GM12878 (cell line): ENCODE measurements at regions of chr1 and their contacts with region 1.

Region 1: DNA sequence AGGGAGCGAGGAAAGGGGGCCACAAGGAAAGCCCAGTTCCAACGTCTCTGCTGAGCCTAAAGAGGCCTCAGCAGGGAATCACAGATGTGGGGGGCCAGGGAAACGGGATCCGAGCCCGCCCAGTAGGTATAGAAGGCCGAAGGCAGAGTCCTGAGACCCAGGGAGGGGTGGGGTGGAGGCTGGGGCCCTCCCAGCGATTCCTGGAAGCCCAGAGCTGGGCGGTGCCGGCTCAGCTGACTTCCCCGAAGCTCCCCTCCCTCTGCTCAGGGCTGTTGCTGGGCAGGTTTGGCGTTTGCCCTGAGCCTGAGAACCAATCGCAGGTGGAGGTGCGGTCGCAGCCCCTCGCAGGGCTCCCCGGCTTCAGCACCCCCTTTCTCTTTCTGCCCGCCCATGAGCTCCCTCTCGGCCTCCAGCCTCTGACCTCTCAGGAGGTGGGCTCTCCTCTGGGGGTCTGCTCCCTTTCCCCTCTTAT is 12.8 kb downstream of the ADAMTSL4 start:
- DNase-seq: no peak
- ATAC-seq: peak; percentile 64
- H3K4me3 ChIP-seq: peak overlapping the region; percentile 80
- H3K27ac ChIP-seq: peak overlapping the region; percentile 98
- H3K4me1 ChIP-seq: peaks cover 42% of the 10 kb centered on the region
- H3K27me3 ChIP-seq: no peaks in the 10 kb centered on the region
- CTCF ChIP-seq: no peak
- EP300 ChIP-seq: no peak
- POLR2A ChIP-seq: peak; percentile 31
- RAD21 ChIP-seq: no peak

Region 2: GRCh38 chr1:150109586-150109985 is 452.4 kb before region 1 on chr1:
- CTCF ChIA-PET with region 1: no interaction called
- POLR2A ChIA-PET with region 1: no interaction called
- RAD21 ChIA-PET with region 1: no interaction called
- SMC1A ChIA-PET with region 1: no interaction called
- in situ Hi-C with region 1: no loop called
- intact Hi-C with region 1: no loop called
- DNase-seq: no peak
- ATAC-seq: no peak
- H3K4me3 ChIP-seq: no peak overlapping the region
- H3K27ac ChIP-seq: peak overlapping the region; percentile 26
- H3K4me1 ChIP-seq: peaks cover 3% of the 10 kb centered on the region; the same call in 1 of the 2 replicates
- H3K27me3 ChIP-seq: no peaks in the 10 kb centered on the region
- CTCF ChIP-seq: no peak
- EP300 ChIP-seq: no peak
- POLR2A ChIP-seq: no peak
- RAD21 ChIP-seq: no peak

Region 3: GRCh38 chr1:150138044-150138443 is 424.0 kb before region 1 on chr1:
- CTCF ChIA-PET with region 1: no interaction called
- POLR2A ChIA-PET with region 1: no interaction called
- RAD21 ChIA-PET with region 1: no interaction called
- SMC1A ChIA-PET with region 1: no interaction called
- in situ Hi-C with region 1: no loop called
- intact Hi-C with region 1: no loop called
- DNase-seq: no peak
- ATAC-seq: no peak; the same call in 2 of the 3 replicates
- H3K4me3 ChIP-seq: no peak overlapping the region
- H3K27ac ChIP-seq: no peak overlapping the region
- H3K4me1 ChIP-seq: peaks cover 8% of the 10 kb centered on the region; the same call in 1 of the 2 replicates
- H3K27me3 ChIP-seq: no peaks in the 10 kb centered on the region
- CTCF ChIP-seq: no peak
- EP300 ChIP-seq: no peak
- POLR2A ChIP-seq: no peak
- RAD21 ChIP-seq: no peak

Region 4: DNA sequence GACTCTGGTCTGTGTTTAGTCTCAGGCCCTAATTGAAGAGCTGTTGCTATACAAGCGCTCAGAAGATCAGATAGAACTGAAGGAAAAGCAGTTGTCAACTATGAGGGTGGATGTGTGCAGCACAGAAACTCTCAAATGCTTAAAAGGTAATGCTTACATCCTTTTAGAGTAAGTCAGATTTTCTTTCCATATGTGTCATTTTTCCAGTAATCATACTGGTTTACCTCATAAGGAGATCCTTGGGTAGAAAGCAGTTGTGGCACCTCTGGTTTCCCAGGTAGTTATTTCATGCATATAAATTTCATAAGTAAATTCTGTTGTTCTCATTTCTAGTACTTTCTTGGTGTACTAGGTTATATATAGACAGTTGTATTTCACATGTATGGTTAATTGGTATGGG is 117.8 kb before region 1 on chr1:
- CTCF ChIA-PET with region 1: no interaction called
- POLR2A ChIA-PET with region 1: no interaction called
- RAD21 ChIA-PET with region 1: no interaction called
- SMC1A ChIA-PET with region 1: no interaction called
- in situ Hi-C with region 1: no loop called
- intact Hi-C with region 1: no loop called
- DNase-seq: no peak
- ATAC-seq: no peak
- H3K4me3 ChIP-seq: no peak overlapping the region
- H3K27ac ChIP-seq: no peak overlapping the region
- H3K4me1 ChIP-seq: no peaks in the 10 kb centered on the region
- H3K27me3 ChIP-seq: no peaks in the 10 kb centered on the region
- CTCF ChIP-seq: no peak
- EP300 ChIP-seq: no peak
- POLR2A ChIP-seq: no peak
- RAD21 ChIP-seq: no peak

Region 5: GRCh38 chr1:150515328-150516048 is 46.5 kb before region 1 on chr1 and contains the start of gene FALEC:
- CTCF ChIA-PET with region 1: interaction called, 11 read pairs
- POLR2A ChIA-PET with region 1: no interaction called
- RAD21 ChIA-PET with region 1: interaction called, 8 read pairs
- SMC1A ChIA-PET with region 1: interaction called, 3 read pairs
- in situ Hi-C with region 1: no loop called
- intact Hi-C with region 1: no loop called
- DNase-seq: peak; percentile 74
- ATAC-seq: peak; percentile 99
- H3K4me3 ChIP-seq: peak within 1 kb of the TSS; percentile 74
- H3K27ac ChIP-seq: peak within 1 kb of the TSS; percentile 50; the same call in 1 of the 2 replicates
- H3K4me1 ChIP-seq: peaks cover 17% of the 10 kb centered on the region
- H3K27me3 ChIP-seq: no peaks in the 10 kb centered on the region
- CTCF ChIP-seq: no peak
- EP300 ChIP-seq: no peak
- POLR2A ChIP-seq: peak; percentile 70
- RAD21 ChIP-seq: no peak
- polyA plus RNA-seq, gene FALEC: 0.21 TPM in 1 of 2 experiments, not detected in the other

Region 6: DNA sequence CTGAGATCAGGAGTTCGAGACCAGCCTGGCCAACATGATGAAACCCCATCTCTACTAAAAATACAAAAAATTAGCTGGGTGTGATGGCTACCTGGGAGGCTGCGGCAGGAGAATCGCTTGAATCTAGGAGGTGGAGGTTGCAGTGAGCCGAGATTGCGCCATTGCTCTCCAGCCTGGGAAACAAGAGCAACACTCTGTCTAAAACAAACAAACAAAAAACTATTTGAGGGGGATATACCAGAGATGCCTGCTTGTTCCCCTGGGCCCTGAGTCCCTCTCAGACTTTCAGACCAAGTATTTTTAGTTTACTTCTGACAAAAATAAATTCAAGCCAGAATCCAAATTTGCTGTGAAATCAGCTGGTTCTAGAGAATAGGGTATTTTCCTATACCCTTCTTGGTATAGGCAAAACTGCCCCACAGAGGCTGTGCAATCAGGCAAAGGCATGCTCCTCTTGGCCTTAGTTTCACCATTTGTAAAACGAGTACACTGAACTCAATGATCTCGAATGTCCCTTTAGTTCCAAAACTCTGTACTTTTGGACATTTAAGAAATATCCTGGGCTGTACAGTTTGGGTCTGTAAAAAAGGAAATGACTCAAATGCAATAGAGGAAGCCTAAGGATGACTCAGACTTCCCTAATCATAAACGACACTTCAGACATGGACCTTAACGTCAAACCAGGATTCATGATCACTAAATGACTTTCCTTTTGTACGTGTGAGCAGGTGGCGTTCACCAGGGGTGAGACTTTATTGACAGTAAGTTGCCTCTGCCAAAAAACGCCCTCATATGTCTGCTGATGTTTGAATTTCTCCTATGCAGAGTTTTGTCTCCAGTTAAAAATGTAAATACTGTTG is 51.3 kb after region 1 on chr1:
- CTCF ChIA-PET with region 1: interaction called, 390 read pairs
- POLR2A ChIA-PET with region 1: interaction called, 95 read pairs
- RAD21 ChIA-PET with region 1: interaction called, 149 read pairs
- SMC1A ChIA-PET with region 1: interaction called, 367 read pairs
- in situ Hi-C with region 1: loop called (anchors 5 kb)
- intact Hi-C with region 1: loop called (anchors 2 kb)
- DNase-seq: peak; percentile 79
- ATAC-seq: peak; percentile 68
- H3K4me3 ChIP-seq: no peak overlapping the region
- H3K27ac ChIP-seq: peak overlapping the region; percentile 80
- H3K4me1 ChIP-seq: peaks cover 41% of the 10 kb centered on the region
- H3K27me3 ChIP-seq: no peaks in the 10 kb centered on the region
- CTCF ChIP-seq: no peak
- EP300 ChIP-seq: peak; percentile 85 to 98
- POLR2A ChIP-seq: 0 out of 2 replicates have a peak, but pooled peaks have one; percentile 20
- RAD21 ChIP-seq: no peak

Region 7: DNA sequence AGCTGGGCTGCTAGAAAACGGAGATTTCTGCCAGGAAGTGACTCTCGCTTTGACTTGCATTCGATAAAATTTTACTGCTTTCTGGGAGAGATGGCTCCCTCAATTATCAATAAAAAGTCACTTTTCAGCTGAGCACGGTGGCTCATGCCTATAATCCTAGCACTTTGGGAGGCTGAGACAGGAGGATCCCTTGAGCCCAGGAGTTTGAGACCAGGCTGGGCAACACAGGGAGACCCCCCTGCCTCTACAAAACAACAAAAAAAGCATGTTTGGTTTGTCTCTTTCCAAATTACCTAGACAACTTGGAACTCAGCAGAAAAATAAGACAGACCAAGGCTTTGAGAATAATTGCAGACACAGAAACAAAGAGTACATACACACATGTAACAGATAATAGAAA is 80.3 kb after region 1 on chr1:
- CTCF ChIA-PET with region 1: interaction called, 13 read pairs
- POLR2A ChIA-PET with region 1: no interaction called
- RAD21 ChIA-PET with region 1: no interaction called
- SMC1A ChIA-PET with region 1: interaction called, 5 read pairs
- in situ Hi-C with region 1: no loop called
- intact Hi-C with region 1: no loop called
- DNase-seq: no peak
- ATAC-seq: no peak
- H3K4me3 ChIP-seq: no peak overlapping the region
- H3K27ac ChIP-seq: no peak overlapping the region
- H3K4me1 ChIP-seq: no peaks in the 10 kb centered on the region
- H3K27me3 ChIP-seq: no peaks in the 10 kb centered on the region
- CTCF ChIP-seq: no peak
- EP300 ChIP-seq: no peak
- POLR2A ChIP-seq: no peak
- RAD21 ChIP-seq: no peak

Region 8: GRCh38 chr1:150765296-150765976 is 203.4 kb after region 1 on chr1 and contains the start of gene CTSS:
- CTCF ChIA-PET with region 1: interaction called, 13 read pairs
- POLR2A ChIA-PET with region 1: interaction called, 3 read pairs
- RAD21 ChIA-PET with region 1: interaction called, 21 read pairs
- SMC1A ChIA-PET with region 1: interaction called, 6 read pairs
- in situ Hi-C with region 1: no loop called
- intact Hi-C with region 1: loop called (anchors 2 kb)
- DNase-seq: peak; percentile 88
- ATAC-seq: peak; percentile 90
- H3K4me3 ChIP-seq: peak within 1 kb of the TSS; percentile 77
- H3K27ac ChIP-seq: peak within 1 kb of the TSS; percentile 96
- H3K4me1 ChIP-seq: peaks cover 9% of the 10 kb centered on the region
- H3K27me3 ChIP-seq: no peaks in the 10 kb centered on the region
- CTCF ChIP-seq: no peak
- EP300 ChIP-seq: no peak; a peak in 1 of 4 replicates
- POLR2A ChIP-seq: no peak
- RAD21 ChIP-seq: no peak
- polyA plus RNA-seq, gene CTSS: 68.6 to 84.8 TPM

Region 9: DNA sequence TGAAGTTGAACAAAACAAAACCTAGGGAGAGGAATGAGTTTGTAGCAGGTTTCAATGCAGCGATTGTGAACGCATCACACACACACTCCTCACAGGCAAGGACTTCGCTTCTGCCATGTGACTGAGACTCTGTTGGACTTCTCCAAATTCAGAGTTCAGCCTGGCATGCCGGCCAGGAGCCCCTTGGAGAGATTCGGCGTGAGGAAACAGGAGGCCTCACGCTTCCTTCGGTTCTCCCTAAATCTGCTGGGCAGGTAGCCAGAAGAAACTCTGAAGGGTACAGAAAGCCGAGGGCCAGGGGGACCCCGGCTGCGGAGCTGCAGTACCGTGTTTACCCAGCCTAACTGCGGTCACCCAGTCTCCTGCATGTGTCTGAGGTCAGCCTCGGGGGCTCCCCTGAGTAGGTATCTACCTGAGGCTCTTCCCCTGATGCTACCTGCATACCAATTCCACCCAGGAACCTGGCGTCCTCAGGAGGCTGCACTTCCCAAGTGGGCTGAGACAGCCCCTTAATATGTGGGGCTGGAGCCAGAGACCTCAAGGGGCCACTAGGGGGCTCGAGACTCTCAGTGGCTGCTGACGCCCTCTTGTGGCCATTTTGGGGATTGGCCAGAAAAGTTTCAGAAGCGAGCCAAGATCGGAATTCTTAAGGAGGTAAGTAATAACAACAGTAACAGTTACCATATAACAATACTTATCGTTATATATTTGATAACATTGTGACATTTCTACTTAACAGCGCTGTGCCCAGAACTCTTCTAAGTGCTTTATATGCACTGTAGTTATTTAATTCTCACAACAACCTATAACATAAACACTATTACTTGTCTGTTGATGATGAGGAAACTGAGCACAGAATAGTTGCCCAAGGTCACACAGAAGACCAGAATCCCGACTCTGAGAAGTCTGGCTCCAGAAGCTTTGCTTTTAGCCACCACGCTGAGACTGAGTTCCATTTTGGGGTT is 417.4 kb after region 1 on chr1:
- CTCF ChIA-PET with region 1: interaction called, 11 read pairs
- POLR2A ChIA-PET with region 1: no interaction called
- RAD21 ChIA-PET with region 1: no interaction called
- SMC1A ChIA-PET with region 1: no interaction called
- in situ Hi-C with region 1: no loop called
- intact Hi-C with region 1: loop called (anchors 5 kb)
- DNase-seq: peak; percentile 40
- ATAC-seq: peak; percentile 78
- H3K4me3 ChIP-seq: no peak overlapping the region
- H3K27ac ChIP-seq: no peak overlapping the region
- H3K4me1 ChIP-seq: no peaks in the 10 kb centered on the region
- H3K27me3 ChIP-seq: no peaks in the 10 kb centered on the region; a peak in 2 of 4 replicates
- CTCF ChIP-seq: peak; percentile 100; a peak in 5 of 6 replicates
- EP300 ChIP-seq: no peak
- POLR2A ChIP-seq: no peak
- RAD21 ChIP-seq: peak; percentile 79